GM12878 (cell line): ENCODE measurements at regions of chr3 and their contacts with region 1.

Region 1: GRCh38 chr3:173553635-173554280 is 156.2 kb downstream of the NLGN1 start:
- DNase-seq: no peak
- ATAC-seq: peak; percentile 43; the same call in 2 of the 3 replicates
- H3K4me3 ChIP-seq: no peak overlapping the region
- H3K27ac ChIP-seq: no peak overlapping the region
- H3K4me1 ChIP-seq: no peaks in the 10 kb centered on the region
- H3K27me3 ChIP-seq: no peaks in the 10 kb centered on the region
- CTCF ChIP-seq: peak; percentile 31 to 54 (median 34); a peak in 2 of 6 replicates
- EP300 ChIP-seq: no peak
- POLR2A ChIP-seq: no peak
- RAD21 ChIP-seq: peak; percentile 42

Region 2: DNA sequence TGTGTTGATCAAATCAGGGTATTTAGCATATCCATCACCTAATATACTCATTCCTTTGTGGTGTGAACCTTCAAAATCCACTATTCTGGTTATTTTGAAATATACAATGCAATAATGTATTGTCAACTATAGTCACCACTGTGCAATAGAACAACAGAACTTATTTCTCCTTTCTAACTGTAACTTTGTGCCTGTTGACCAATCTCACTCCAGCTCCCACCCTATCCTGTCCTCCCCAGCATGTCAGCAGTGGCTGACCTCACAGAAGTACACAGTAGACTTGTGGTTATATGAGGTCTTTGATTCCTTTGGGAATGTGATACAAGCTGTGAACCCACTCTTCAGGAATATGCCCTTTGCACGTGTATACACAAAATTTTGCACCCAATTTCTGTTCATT is 739.0 kb before region 1 on chr3:
- CTCF ChIA-PET with region 1: interaction called, 7 read pairs
- POLR2A ChIA-PET with region 1: no interaction called
- RAD21 ChIA-PET with region 1: no interaction called
- SMC1A ChIA-PET with region 1: no interaction called
- in situ Hi-C with region 1: no loop called
- intact Hi-C with region 1: loop called (anchors 10 kb)
- DNase-seq: no peak
- ATAC-seq: no peak
- H3K4me3 ChIP-seq: no peak overlapping the region
- H3K27ac ChIP-seq: no peak overlapping the region
- H3K4me1 ChIP-seq: no peaks in the 10 kb centered on the region
- H3K27me3 ChIP-seq: no peaks in the 10 kb centered on the region
- CTCF ChIP-seq: no peak
- EP300 ChIP-seq: no peak
- POLR2A ChIP-seq: no peak
- RAD21 ChIP-seq: no peak

Region 3: GRCh38 chr3:172982736-172983364 is 570.9 kb before region 1 on chr3:
- CTCF ChIA-PET with region 1: no interaction called
- POLR2A ChIA-PET with region 1: no interaction called
- RAD21 ChIA-PET with region 1: no interaction called
- SMC1A ChIA-PET with region 1: no interaction called
- in situ Hi-C with region 1: no loop called
- intact Hi-C with region 1: loop called (anchors 5 kb)
- DNase-seq: no peak
- ATAC-seq: peak; percentile 40; the same call in 2 of the 3 replicates
- H3K4me3 ChIP-seq: no peak overlapping the region
- H3K27ac ChIP-seq: no peak overlapping the region
- H3K4me1 ChIP-seq: no peaks in the 10 kb centered on the region
- H3K27me3 ChIP-seq: no peaks in the 10 kb centered on the region
- CTCF ChIP-seq: no peak; a peak in 1 of 6 replicates
- EP300 ChIP-seq: no peak
- POLR2A ChIP-seq: no peak
- RAD21 ChIP-seq: peak; percentile 35; the same call in 1 of the 2 replicates

Region 4: GRCh38 chr3:173354124-173354523 is 199.6 kb before region 1 on chr3:
- CTCF ChIA-PET with region 1: no interaction called
- POLR2A ChIA-PET with region 1: no interaction called
- RAD21 ChIA-PET with region 1: no interaction called
- SMC1A ChIA-PET with region 1: no interaction called
- in situ Hi-C with region 1: no loop called
- intact Hi-C with region 1: no loop called
- DNase-seq: no peak
- ATAC-seq: no peak
- H3K4me3 ChIP-seq: no peak overlapping the region
- H3K27ac ChIP-seq: no peak overlapping the region
- H3K4me1 ChIP-seq: no peaks in the 10 kb centered on the region
- H3K27me3 ChIP-seq: no peaks in the 10 kb centered on the region
- CTCF ChIP-seq: no peak
- EP300 ChIP-seq: no peak
- POLR2A ChIP-seq: no peak
- RAD21 ChIP-seq: no peak

Region 5: GRCh38 chr3:173371848-173372487 is 181.8 kb before region 1 on chr3:
- CTCF ChIA-PET with region 1: interaction called, 3 read pairs
- POLR2A ChIA-PET with region 1: no interaction called
- RAD21 ChIA-PET with region 1: no interaction called
- SMC1A ChIA-PET with region 1: no interaction called
- in situ Hi-C with region 1: no loop called
- intact Hi-C with region 1: loop called (anchors 1 kb)
- DNase-seq: no peak
- ATAC-seq: 0 out of 3 replicates have a peak, but pooled peaks have one; percentile 42
- H3K4me3 ChIP-seq: no peak overlapping the region
- H3K27ac ChIP-seq: no peak overlapping the region
- H3K4me1 ChIP-seq: no peaks in the 10 kb centered on the region
- H3K27me3 ChIP-seq: no peaks in the 10 kb centered on the region
- CTCF ChIP-seq: peak; percentile 34 to 47 (median 40); a peak in 5 of 6 replicates
- EP300 ChIP-seq: no peak
- POLR2A ChIP-seq: no peak
- RAD21 ChIP-seq: 0 out of 2 replicates have a peak, but pooled peaks have one; percentile 24

Region 6: DNA sequence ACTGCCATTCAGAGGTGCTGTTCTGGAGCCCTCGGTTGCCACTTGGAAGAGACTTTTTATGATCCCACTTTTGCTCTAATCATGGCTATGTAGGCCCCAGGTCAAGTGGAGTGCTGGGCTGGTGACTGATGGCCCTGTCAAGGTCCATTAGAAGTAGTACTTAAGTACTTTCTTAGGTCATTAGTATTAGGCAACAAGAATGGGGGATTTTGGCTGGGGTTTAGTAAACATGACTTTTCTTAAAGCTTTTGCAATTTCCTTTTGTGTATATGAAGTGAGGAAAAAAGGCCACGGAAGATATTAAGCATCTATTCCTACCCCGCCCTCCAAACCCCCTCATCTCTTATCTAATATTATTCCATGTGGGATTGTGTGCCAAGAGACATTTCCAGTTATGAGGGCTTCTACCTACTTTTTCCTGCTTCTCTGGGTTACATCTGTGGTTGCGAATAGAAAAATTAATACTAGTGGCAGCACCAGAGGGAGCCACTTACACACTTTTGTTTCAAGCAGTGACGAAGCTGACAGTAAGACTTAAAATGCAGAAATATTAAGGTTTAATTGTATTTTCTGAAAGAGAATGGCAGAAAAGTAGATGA is 142.3 kb before region 1 on chr3:
- CTCF ChIA-PET with region 1: interaction called, 4 read pairs
- POLR2A ChIA-PET with region 1: no interaction called
- RAD21 ChIA-PET with region 1: no interaction called
- SMC1A ChIA-PET with region 1: no interaction called
- in situ Hi-C with region 1: no loop called
- intact Hi-C with region 1: loop called (anchors 5 kb)
- DNase-seq: no peak
- ATAC-seq: no peak
- H3K4me3 ChIP-seq: no peak overlapping the region
- H3K27ac ChIP-seq: no peak overlapping the region
- H3K4me1 ChIP-seq: no peaks in the 10 kb centered on the region
- H3K27me3 ChIP-seq: no peaks in the 10 kb centered on the region
- CTCF ChIP-seq: peak in 2 of 3 experiments; percentile 11 to 39; a peak in 3 of 6 replicates
- EP300 ChIP-seq: no peak
- POLR2A ChIP-seq: no peak
- RAD21 ChIP-seq: peak; percentile 43; the same call in 1 of the 2 replicates